IMR-90 (cell line): ENCODE measurements at regions of chr17 and their contacts with region 1.

Region 1: DNA sequence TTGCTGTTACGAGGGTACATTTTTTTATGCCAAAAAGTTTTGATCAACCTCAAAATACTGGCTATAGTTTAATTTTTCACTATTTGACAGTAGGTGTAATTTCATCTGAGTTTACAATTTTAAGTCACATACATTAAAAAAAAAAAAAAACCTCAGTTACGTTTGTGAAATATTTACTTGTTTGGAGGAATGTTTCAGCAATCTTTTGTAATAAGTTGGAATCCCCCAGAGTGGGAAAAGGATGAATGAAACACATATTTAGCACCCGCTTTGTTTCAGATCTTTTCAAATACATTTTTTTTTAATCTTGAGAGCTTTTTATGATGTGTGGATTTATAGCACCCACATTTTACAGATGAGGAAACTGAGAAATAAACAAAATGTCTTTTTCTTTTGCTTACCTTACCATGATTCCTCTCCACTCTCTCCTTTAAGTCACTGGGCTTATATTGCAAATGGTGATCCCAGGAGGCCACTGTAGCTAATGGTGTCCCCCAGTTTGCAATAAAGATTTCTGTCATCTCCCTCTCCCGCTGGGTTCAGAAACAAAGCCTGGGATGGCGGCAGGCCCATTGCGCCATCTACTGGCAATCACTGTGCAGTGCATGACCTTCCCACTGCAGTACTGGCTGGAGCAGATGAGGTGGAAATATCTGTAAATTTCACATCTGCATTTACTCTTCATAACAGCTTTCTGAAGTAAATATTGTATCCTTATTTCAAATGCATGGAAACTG is 27.7 kb downstream of the TBC1D3B start:
- DNase-seq: peak; percentile 55
- ATAC-seq: peak; percentile 100
- H3K4me3 ChIP-seq: no peak overlapping the region
- H3K27ac ChIP-seq: no peak overlapping the region
- H3K4me1 ChIP-seq: no peaks in the 10 kb centered on the region
- H3K27me3 ChIP-seq: peaks cover 1% of the 10 kb centered on the region
- CTCF ChIP-seq: peak; percentile 97
- POLR2A ChIP-seq: no peak
- RAD21 ChIP-seq: peak; percentile 82

Region 2: GRCh38 chr17:36066365-36066985 is 82.3 kb before region 1 on chr17:
- CTCF ChIA-PET with region 1: no interaction called
- POLR2A ChIA-PET with region 1: no interaction called
- dilution Hi-C with region 1: no loop called
- in situ Hi-C with region 1: no loop called
- intact Hi-C with region 1: loop called (anchors 10 kb)
- DNase-seq: no peak
- ATAC-seq: no peak
- H3K4me3 ChIP-seq: no peak overlapping the region
- H3K27ac ChIP-seq: no peak overlapping the region
- H3K4me1 ChIP-seq: no peaks in the 10 kb centered on the region
- H3K27me3 ChIP-seq: no peaks in the 10 kb centered on the region
- CTCF ChIP-seq: no peak
- POLR2A ChIP-seq: no peak
- RAD21 ChIP-seq: no peak

Region 3: DNA sequence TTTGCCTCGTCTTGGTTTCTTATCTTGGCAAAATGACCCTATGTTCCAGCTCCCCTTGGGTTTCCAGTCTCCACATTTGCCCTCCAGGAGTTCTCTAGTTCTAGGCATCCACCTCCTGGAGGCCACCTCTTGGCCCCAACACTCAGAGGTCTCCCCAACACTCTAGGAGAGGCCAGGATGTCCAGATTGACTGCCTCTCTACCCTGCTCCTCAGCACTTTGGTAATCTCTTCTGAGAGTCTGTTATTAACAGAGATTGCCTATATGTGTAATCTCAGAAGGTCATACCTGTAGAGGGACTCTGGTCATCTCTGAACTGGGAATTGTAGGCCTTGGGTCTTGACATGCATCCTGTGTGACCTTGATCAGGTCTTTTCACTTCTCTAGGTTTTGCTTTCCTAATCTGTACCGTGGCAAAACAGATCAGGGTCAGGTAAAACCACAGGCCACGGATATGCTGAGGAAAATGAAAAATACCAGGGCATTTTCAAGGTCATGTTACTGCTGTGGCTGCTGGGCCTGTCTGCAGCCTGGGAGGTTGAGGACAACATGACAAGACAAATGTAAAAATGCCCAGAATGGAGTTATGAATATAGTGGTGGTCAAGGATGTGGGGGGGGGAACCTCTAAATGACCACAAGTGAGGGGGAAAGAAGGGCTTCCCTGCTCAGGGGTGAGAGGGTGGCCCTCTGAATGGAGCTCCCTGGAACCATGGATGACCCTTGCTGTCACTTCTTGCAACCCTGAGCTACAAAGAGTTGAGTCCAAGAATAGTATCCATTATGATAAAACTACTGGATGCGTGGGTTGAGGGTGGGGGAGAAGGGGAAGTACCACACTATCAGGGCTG is 57.1 kb after region 1 on chr17:
- CTCF ChIA-PET with region 1: no interaction called
- POLR2A ChIA-PET with region 1: no interaction called
- dilution Hi-C with region 1: no loop called
- in situ Hi-C with region 1: no loop called
- intact Hi-C with region 1: loop called (anchors 5 kb)
- DNase-seq: no peak
- ATAC-seq: no peak
- H3K4me3 ChIP-seq: no peak overlapping the region
- H3K27ac ChIP-seq: no peak overlapping the region
- H3K4me1 ChIP-seq: no peaks in the 10 kb centered on the region
- H3K27me3 ChIP-seq: peaks cover 3% of the 10 kb centered on the region; the same call in 1 of the 2 replicates
- CTCF ChIP-seq: no peak
- POLR2A ChIP-seq: no peak
- RAD21 ChIP-seq: no peak